Right ventricle myocardium superior (tissue), 1 donor: ENCODE measurements at regions of chr11 and their contacts with region 1.

Region 1: GRCh38 chr11:102216433-102217075 is 100.7 kb upstream of the BIRC3 start:
- DNase-seq: no peak
- ATAC-seq: peak; percentile 51

Region 2: GRCh38 chr11:101807531-101807930 is 409.0 kb before region 1 on chr11:
- intact Hi-C with region 1: no loop called
- DNase-seq: no peak
- ATAC-seq: no peak

Region 3: GRCh38 chr11:102109896-102110760 is 106.4 kb before region 1 on chr11 and contains the start of gene YAP1:
- intact Hi-C with region 1: loop called (anchors 10 kb)
- DNase-seq: peak; percentile 93
- ATAC-seq: peak; percentile 92
- total RNA-seq, gene YAP1: 73.8 TPM